ENCODE measurements at regions of chr11 and their contacts with region 1.

Region 1: DNA sequence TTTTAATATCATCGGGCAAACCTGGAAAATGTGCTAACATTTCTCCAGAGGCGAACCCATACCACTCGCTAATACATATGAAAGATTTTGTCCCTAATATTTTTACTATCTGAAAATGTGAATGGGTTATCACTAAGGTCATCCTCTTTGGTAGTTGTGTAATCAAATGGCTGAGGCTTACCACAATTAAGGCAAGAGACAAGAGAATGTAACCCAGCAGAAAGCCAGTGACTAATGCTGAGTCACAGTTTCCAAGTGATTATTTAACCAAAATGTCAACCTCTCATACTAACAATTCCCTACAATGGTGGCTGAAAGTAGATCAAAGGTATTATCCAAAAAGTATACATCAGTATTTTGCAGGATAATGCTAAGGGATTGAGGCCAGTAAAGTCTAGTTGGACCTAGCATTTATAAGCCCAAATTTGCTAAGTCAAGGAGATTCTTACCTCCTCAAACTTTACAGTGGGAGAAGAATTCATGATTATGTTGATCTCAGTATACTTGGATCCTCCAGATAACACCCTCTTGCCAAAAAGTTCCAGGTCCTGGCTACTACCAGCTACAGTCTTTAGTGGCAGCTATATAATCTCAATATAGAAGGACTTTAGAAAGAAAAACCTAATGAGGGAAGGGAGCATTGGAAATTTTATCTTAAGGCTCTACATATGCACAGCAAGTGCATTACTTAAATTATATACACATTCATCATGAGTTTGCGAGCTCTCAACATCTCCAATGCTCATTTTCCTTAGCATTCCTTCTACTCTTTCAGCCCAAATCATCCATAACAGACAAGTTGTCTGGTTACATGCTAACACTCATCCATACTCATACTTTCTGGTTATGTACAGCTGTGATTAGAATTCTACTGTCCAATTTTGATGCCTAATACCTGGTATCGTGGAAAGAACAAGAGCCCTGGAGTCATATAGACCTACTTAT is 25.4 kb downstream of the SIK3 start:
- DNase-seq: no peak
- H3K4me3 Mint-ChIP-seq: no peak overlapping the region
- H3K27ac Mint-ChIP-seq: no peak overlapping the region
- H3K4me1 Mint-ChIP-seq: peaks cover 41% of the 10 kb centered on the region
- H3K27me3 Mint-ChIP-seq: no peaks in the 10 kb centered on the region

Region 2: GRCh38 chr11:117092951-117093590 is 20.3 kb after region 1 on chr11:
- intact Hi-C with region 1: loop called (anchors 1 kb)
- DNase-seq: no peak
- H3K4me3 Mint-ChIP-seq: no peak overlapping the region
- H3K27ac Mint-ChIP-seq: peak overlapping the region; percentile 67
- H3K4me1 Mint-ChIP-seq: peaks cover 70% of the 10 kb centered on the region
- H3K27me3 Mint-ChIP-seq: no peaks in the 10 kb centered on the region

Measured in activated T-helper 2 cell treated with anti-CD3 and anti-CD28 coated beads, Interferon-gamma antibody, Interleukin-2, Interleukin-4, amounts not matched to agents 10 μg/mL and 5 μg/mL and 100 μg/mL, durations not matched to agents 14 hours and 24 hours and 36 hours (primary cell).